Gastrocnemius medialis (tissue), 4 donors: ENCODE measurements at regions of chr17 and their contacts with region 1.

Region 1: GRCh38 chr17:67042104-67042899 is 2.1 kb upstream of the CACNG1 start:
- DNase-seq: no peak
- ATAC-seq: no peak
- H3K4me3 ChIP-seq: no peak overlapping the region
- H3K27ac ChIP-seq: peak overlapping the region; percentile 97 to 98 (median 98)
- H3K4me1 ChIP-seq: peaks cover 19 to 24% of the 10 kb centered on the region in 2 donors
- H3K27me3 ChIP-seq: no peaks in the 10 kb centered on the region
- CTCF ChIP-seq: no peak
- POLR2A ChIP-seq: no peak

Region 2: DNA sequence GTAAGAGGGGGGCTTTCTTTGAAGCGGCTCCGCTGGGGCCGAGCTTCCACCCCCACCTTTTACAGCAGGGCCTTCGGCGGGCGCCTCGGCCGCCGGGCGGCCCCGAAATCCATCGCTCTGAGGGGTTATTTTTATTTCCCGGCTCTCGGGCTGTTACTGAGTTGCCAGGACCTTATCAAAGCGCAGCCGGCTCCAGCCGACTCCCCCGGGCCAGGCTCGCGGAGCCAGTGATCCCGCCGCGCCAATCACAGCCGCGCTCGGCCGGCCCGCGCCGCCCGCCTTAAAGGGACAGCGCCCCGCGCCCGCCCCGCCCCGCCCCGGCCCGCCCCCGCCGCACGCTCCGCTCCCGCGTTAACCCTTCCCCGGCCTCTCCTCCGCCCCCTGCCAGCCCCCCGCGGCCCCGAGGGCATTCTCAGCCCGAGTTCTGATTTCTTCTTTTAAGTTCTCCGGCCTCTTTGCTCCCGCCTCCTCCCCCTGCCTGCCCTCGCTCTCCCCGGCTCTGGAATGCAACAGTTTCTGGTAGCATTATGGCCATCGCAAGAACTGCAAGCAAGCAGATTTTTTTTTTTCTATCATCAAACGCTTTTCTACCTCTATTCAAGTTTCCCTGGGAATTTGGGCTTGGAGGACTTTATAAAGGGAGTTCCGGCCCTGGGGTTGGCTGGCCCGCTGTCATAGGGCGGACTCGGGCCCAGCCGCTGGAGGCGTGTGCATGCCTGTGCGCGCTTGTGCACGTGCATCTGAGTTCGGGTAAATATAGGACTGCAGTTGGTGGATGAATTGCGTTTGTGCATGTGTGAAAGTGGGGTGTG is 1480.7 kb before region 1 on chr17 and contains the start of gene AXIN2:
- in situ Hi-C with region 1: no loop called
- intact Hi-C with region 1: loop called (anchors 5 kb)
- DNase-seq: peak; percentile 86 to 91
- ATAC-seq: peak; percentile 51 to 59
- H3K4me3 ChIP-seq: peak within 1 kb of the TSS in 2 of 4 donors; percentile 72 to 99
- H3K27ac ChIP-seq: no peak within 1 kb of the TSS
- H3K4me1 ChIP-seq: peaks cover 47 to 48% of the 10 kb centered on the region in 2 donors
- H3K27me3 ChIP-seq: no peaks in the 10 kb centered on the region
- CTCF ChIP-seq: peak in 3 of 5 experiments; percentile 14 to 49 (median 43)
- POLR2A ChIP-seq: peak in 1 of 2 donors; percentile 69
- total RNA-seq, gene AXIN2: 9.9 to 27.2 (median 17.9) TPM

Region 3: GRCh38 chr17:67021718-67022450 is 20.4 kb before region 1 on chr17:
- in situ Hi-C with region 1: no loop called
- intact Hi-C with region 1: loop called (anchors 1 kb)
- DNase-seq: peak in 1 of 2 donors; percentile 61
- ATAC-seq: peak; percentile 76 to 81
- H3K4me3 ChIP-seq: no peak overlapping the region
- H3K27ac ChIP-seq: peak overlapping the region; percentile 51 to 81 (median 62)
- H3K4me1 ChIP-seq: peaks cover 0 to 13% of the 10 kb centered on the region in 2 donors
- H3K27me3 ChIP-seq: no peaks in the 10 kb centered on the region
- CTCF ChIP-seq: no peak
- POLR2A ChIP-seq: no peak

Region 4: GRCh38 chr17:67105213-67105612 is 62.9 kb after region 1 on chr17:
- in situ Hi-C with region 1: loop called in 1 of 4 experiments (anchors 10 kb)
- intact Hi-C with region 1: no loop called
- DNase-seq: no peak
- ATAC-seq: peak; percentile 41 to 77
- H3K4me3 ChIP-seq: no peak overlapping the region
- H3K27ac ChIP-seq: peak overlapping the region in 3 of 4 donors; percentile 8 to 38 (median 22)
- H3K4me1 ChIP-seq: peaks cover 9 to 23% of the 10 kb centered on the region in 2 donors
- H3K27me3 ChIP-seq: no peaks in the 10 kb centered on the region
- CTCF ChIP-seq: no peak
- POLR2A ChIP-seq: no peak

Region 5: DNA sequence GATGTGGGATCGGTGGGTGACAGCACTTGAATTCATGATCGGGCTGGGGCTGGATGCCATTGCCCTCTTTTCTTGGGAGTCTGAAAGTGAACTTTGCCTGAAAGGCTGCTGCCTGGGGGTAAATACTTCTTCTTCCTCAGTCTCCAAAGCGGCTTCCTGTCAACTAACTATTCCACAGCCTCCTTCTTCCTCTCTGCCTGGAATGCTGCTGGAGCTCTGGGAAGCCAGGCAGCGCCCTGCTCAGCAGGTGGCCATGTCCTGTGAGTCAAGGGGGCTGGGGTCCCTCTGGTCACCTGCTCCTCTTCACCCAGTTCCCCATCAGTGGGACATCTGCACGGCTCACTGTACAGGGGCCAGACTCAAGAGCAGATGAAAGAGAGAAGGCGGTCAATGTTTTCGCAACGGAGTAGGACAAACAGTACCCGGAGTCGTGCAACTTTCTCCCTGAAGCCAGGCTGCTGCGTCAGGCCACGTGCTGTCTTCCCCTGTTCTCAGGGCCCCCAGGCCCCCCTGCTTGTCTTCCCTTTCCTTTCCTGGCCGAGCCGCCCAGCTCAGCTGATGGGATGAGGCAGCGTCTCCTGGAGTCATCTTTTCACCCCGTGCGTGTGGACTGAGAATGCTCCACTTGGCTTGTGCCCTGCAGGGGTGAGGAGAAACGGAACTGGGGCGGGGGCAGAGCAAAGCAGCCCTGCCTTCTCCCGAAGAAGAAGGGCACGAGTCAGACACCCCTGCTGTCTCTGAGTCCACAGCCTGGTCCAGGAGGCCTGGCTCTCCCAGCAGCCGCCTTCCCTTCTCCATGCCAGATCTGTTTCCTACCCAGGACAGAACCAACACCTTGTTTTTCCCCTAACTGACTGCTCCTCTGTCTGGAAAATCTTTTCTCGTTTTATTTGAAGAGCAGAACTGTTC is 1335.8 kb after region 1 on chr17:
- in situ Hi-C with region 1: no loop called
- intact Hi-C with region 1: loop called (anchors 10 kb)
- DNase-seq: peak; percentile 100
- ATAC-seq: peak; percentile 82 to 88
- H3K4me3 ChIP-seq: peak overlapping the region; percentile 17 to 37 (median 22)
- H3K27ac ChIP-seq: peak overlapping the region; percentile 93 to 98 (median 96)
- H3K4me1 ChIP-seq: peaks cover 41 to 42% of the 10 kb centered on the region in 2 donors
- H3K27me3 ChIP-seq: no peaks in the 10 kb centered on the region
- CTCF ChIP-seq: no peak
- POLR2A ChIP-seq: peak; percentile 56 to 76